ENCODE measurements at regions of chr18 and their contacts with region 1.

Region 1: GRCh38 chr18:33201509-33201926 is 239.0 kb downstream of the CCDC178 start:
- DNase-seq: no peak
- ATAC-seq: no peak
- H3K4me3 ChIP-seq: no peak overlapping the region
- H3K27ac ChIP-seq: no peak overlapping the region
- H3K4me1 ChIP-seq: no peaks in the 10 kb centered on the region
- H3K27me3 ChIP-seq: no peaks in the 10 kb centered on the region
- CTCF ChIP-seq: peak; percentile 64

Region 2: GRCh38 chr18:32714571-32715148 is 486.9 kb before region 1 on chr18:
- CTCF ChIA-PET with region 1: no interaction called
- POLR2A ChIA-PET with region 1: no interaction called
- in situ Hi-C with region 1: no loop called
- intact Hi-C with region 1: loop called (anchors 10 kb)
- DNase-seq: peak; percentile 76
- ATAC-seq: peak; percentile 90
- H3K4me3 ChIP-seq: no peak overlapping the region
- H3K27ac ChIP-seq: peak overlapping the region; percentile 54
- H3K4me1 ChIP-seq: no peaks in the 10 kb centered on the region
- H3K27me3 ChIP-seq: no peaks in the 10 kb centered on the region
- CTCF ChIP-seq: peak; percentile 79

Region 3: GRCh38 chr18:33107511-33107910 is 94.0 kb before region 1 on chr18:
- CTCF ChIA-PET with region 1: no interaction called
- POLR2A ChIA-PET with region 1: no interaction called
- in situ Hi-C with region 1: no loop called
- intact Hi-C with region 1: no loop called
- DNase-seq: no peak
- ATAC-seq: no peak
- H3K4me3 ChIP-seq: no peak overlapping the region
- H3K27ac ChIP-seq: no peak overlapping the region
- H3K4me1 ChIP-seq: no peaks in the 10 kb centered on the region
- H3K27me3 ChIP-seq: no peaks in the 10 kb centered on the region
- CTCF ChIP-seq: no peak

Region 4: DNA sequence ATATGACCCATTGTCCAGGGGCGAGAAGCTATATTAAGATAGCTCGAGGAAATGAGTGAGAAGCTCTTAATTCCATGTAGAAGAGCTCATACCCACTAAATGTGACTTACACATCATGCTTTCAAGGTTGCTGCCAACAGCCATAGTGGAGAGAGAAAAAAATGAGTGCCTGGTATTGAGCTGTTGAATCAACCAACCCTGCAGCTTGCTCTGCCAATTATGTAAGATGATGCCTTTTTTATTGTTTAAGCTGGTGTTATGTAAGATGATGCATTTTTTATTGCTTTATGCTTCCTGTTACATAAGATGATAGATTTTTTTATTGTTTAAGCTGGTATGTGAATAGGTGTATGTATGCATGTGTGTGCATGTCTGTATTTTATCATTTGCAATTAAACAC is 10.8 kb after region 1 on chr18:
- CTCF ChIA-PET with region 1: no interaction called
- POLR2A ChIA-PET with region 1: no interaction called
- in situ Hi-C with region 1: no loop called
- intact Hi-C with region 1: no loop called
- DNase-seq: no peak
- ATAC-seq: no peak
- H3K4me3 ChIP-seq: no peak overlapping the region
- H3K27ac ChIP-seq: no peak overlapping the region
- H3K4me1 ChIP-seq: no peaks in the 10 kb centered on the region
- H3K27me3 ChIP-seq: no peaks in the 10 kb centered on the region
- CTCF ChIP-seq: no peak

Region 5: DNA sequence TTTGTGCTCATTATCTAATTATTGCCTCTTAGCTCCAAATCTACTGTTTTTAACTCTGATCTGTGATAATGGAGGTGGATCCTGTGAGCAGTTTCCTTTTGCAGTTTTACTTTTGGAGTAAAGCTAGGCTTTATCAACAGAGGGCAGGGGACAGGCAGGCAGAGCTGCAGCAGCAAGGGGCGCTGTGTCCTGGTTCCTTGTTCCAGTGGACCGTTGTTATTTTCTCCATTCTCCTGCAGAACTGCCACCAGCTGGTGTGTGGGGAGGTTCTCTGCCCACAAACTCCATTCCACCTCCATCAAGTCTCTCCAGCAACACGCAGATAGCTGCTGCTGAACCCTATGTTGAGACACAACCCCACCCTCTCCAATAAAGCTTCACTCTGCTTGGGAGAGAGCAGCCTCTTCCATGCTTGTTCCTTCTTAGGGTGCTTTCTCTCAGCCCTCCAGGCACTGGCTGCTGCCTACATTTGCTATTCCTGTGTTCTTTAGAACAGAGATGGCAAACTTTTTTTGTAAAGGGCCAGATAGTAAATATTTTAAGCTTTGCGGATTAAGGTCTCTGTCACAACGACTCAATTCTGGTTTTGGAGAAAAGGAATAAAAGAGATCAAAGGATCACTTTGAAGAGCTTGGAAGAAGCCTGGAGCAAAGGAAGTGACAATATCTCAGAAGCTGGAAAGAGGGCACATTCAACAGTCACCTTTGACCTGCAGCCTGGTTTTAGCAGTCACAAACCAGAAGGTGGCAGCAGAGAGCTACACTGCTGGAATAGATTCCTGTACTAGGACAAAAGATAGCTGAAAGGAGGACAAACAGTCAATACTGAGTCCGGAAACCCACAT is 30.2 kb after region 1 on chr18:
- CTCF ChIA-PET with region 1: no interaction called
- POLR2A ChIA-PET with region 1: no interaction called
- in situ Hi-C with region 1: no loop called
- intact Hi-C with region 1: no loop called
- DNase-seq: peak; percentile 68
- ATAC-seq: peak; percentile 84
- H3K4me3 ChIP-seq: no peak overlapping the region
- H3K27ac ChIP-seq: no peak overlapping the region
- H3K4me1 ChIP-seq: no peaks in the 10 kb centered on the region
- H3K27me3 ChIP-seq: no peaks in the 10 kb centered on the region
- CTCF ChIP-seq: peak; percentile 91